HEK293 (cell line): ENCODE measurements at regions of chr1 and their contacts with region 1.

Region 1: GRCh38 chr1:100895540-100896483 is at the start of gene SLC30A7:
- H3K4me3 ChIP-seq: peak within 1 kb of the TSS; percentile 66
- H3K27ac ChIP-seq: peak within 1 kb of the TSS; percentile 88
- H3K4me1 ChIP-seq: 0 out of 2 replicates have a peak, but pooled peaks cover 2% of the 10 kb centered on the region
- CTCF ChIP-seq: peak; percentile 3; the same call in 1 of the 2 replicates

Region 2: GRCh38 chr1:100785470-100786052 is 110.3 kb before region 1 on chr1:
- CTCF ChIA-PET with region 1: no interaction called
- POLR2A ChIA-PET with region 1: no interaction called
- H3K4me3 ChIP-seq: no peak overlapping the region
- H3K27ac ChIP-seq: no peak overlapping the region
- H3K4me1 ChIP-seq: no peaks in the 10 kb centered on the region
- CTCF ChIP-seq: no peak

Region 3: GRCh38 chr1:101130673-101131072 is 234.9 kb after region 1 on chr1:
- CTCF ChIA-PET with region 1: no interaction called
- POLR2A ChIA-PET with region 1: interaction called, 12 read pairs
- H3K4me3 ChIP-seq: peak overlapping the region; percentile 8; the same call in 1 of the 2 replicates
- H3K27ac ChIP-seq: no peak overlapping the region
- H3K4me1 ChIP-seq: peaks cover 3% of the 10 kb centered on the region
- CTCF ChIP-seq: no peak